Mammary epithelial cell (primary cell): ENCODE measurements at regions of chr19 and their contacts with region 1.

Region 1: GRCh38 chr19:5600797-5601196 is 21.8 kb downstream of the SAFB2 start:
- DNase-seq: no peak
- H3K4me3 ChIP-seq: no peak overlapping the region
- H3K27ac ChIP-seq: no peak overlapping the region
- H3K4me1 ChIP-seq: no peaks in the 10 kb centered on the region
- H3K27me3 ChIP-seq: no peaks in the 10 kb centered on the region
- CTCF ChIP-seq: no peak

Region 2: GRCh38 chr19:5503598-5503997 is 97.2 kb before region 1 on chr19:
- CTCF ChIA-PET with region 1: no interaction called
- dilution Hi-C with region 1: loop called (anchors 5 kb)
- in situ Hi-C with region 1: no loop called
- intact Hi-C with region 1: no loop called
- DNase-seq: no peak
- H3K4me3 ChIP-seq: no peak overlapping the region
- H3K27ac ChIP-seq: no peak overlapping the region
- H3K4me1 ChIP-seq: no peaks in the 10 kb centered on the region
- H3K27me3 ChIP-seq: no peaks in the 10 kb centered on the region
- CTCF ChIP-seq: peak in 1 of 2 donors; percentile 34

Region 3: DNA sequence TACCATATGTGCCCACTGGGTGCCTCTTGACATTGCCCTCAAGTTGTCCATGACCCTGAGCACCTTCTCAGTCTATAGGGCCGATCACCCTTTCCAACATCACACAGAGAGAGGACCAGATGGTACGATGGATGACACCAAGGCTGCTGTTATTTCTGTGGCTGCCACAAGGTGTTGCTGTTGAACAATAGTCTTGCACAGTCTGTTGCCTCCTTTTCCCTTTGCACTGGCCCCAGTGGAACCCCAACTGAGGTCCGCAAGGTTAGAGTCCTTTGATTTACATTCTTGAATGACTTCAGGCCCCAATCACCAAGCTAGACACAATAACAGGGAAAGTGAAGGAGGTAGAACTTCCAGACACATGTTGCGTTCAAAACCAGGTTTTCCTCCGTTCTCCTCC is 85.1 kb before region 1 on chr19:
- CTCF ChIA-PET with region 1: no interaction called
- dilution Hi-C with region 1: no loop called
- in situ Hi-C with region 1: no loop called
- intact Hi-C with region 1: no loop called
- DNase-seq: no peak
- H3K4me3 ChIP-seq: no peak overlapping the region
- H3K27ac ChIP-seq: no peak overlapping the region
- H3K4me1 ChIP-seq: no peaks in the 10 kb centered on the region
- H3K27me3 ChIP-seq: no peaks in the 10 kb centered on the region
- CTCF ChIP-seq: peak in 1 of 2 donors; percentile 28

Region 4: GRCh38 chr19:5672708-5673459 is 72.1 kb after region 1 on chr19:
- CTCF ChIA-PET with region 1: no interaction called
- dilution Hi-C with region 1: loop called (anchors 5 kb)
- in situ Hi-C with region 1: no loop called
- intact Hi-C with region 1: no loop called
- DNase-seq: no peak
- H3K4me3 ChIP-seq: no peak overlapping the region
- H3K27ac ChIP-seq: no peak overlapping the region
- H3K4me1 ChIP-seq: no peaks in the 10 kb centered on the region
- H3K27me3 ChIP-seq: no peaks in the 10 kb centered on the region
- CTCF ChIP-seq: no peak